Naive thymus-derived CD4-positive, alpha-beta T cell (primary cell): ENCODE measurements at regions of chr6 and their contacts with region 1.

Region 1: DNA sequence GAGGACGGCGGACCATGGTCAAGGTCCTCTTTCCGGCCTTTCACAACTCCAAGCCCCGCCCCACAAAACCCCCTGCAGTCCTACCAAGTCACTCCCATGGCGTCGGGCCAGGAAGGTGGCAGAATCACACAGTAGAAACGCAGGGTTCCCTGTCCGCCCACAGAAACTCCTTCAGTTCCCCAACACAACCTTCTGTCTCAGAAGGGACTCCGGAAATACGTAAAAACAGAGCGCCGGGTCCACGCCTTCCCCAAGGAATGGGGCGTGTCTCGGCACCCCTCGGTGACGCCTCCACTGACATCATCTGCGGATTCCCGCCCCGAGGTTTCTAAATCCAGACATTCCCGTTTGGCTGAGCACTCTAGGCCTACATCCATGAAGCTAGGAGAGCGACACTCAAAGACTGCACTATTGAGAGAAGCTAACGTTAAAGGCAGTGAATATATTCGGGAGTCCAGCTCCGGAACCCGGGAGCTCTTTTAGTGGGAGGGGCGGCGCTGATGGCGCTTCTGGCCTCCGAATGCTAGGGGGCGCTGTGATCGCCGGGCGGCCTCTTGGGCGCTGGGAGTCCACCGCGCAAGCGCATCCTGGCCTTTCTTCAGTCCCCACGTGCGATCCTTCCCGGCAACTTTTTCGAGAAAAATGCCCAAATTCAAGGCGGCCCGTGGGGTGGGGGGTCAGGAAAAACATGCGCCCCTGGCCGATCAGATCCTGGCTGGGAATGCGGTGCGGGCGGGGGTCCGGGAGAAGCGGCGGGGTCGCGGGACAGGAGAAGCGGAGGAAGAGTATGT is at the starts of genes BYSL and MED20:
- DNase-seq: peak; percentile 93 to 99 (median 96)
- ATAC-seq: peak; percentile 96
- H3K4me3 ChIP-seq: peak within 1 kb of the TSS; percentile 76
- H3K4me3 Mint-ChIP-seq: peak within 1 kb of the TSS; percentile 95 to 100 (median 99)
- H3K27ac ChIP-seq: peak within 1 kb of the TSS; percentile 95
- H3K27ac Mint-ChIP-seq: peak within 1 kb of the TSS; percentile 94 to 100 (median 99)
- H3K4me1 ChIP-seq: peaks cover 20 to 24% of the 10 kb centered on the region in 2 donors
- H3K4me1 Mint-ChIP-seq: peaks cover 27 to 58% (median 50%) of the 10 kb centered on the region in 7 donors
- H3K27me3 ChIP-seq: no peaks in the 10 kb centered on the region
- H3K27me3 Mint-ChIP-seq: peaks cover 0 to 3% (median 0%) of the 10 kb centered on the region in 5 donors
- total RNA-seq, gene BYSL: 3.9 to 35.7 (median 8.1) TPM
- total RNA-seq, gene MED20: 4.5 to 21.7 (median 9.4) TPM

Region 2: GRCh38 chr6:41895300-41896233 is 25.5 kb before region 1 on chr6 and contains the start of gene USP49:
- CTCF ChIA-PET with region 1: interaction called, 4 read pairs
- POLR2A ChIA-PET with region 1: interaction called, 8 read pairs
- intact Hi-C with region 1: loop called (anchors 1 kb)
- DNase-seq: peak; percentile 83 to 92 (median 90)
- ATAC-seq: peak; percentile 97
- H3K4me3 ChIP-seq: peak within 1 kb of the TSS; percentile 69
- H3K4me3 Mint-ChIP-seq: peak within 1 kb of the TSS in 1 of 10 donors; percentile 94
- H3K27ac ChIP-seq: peak within 1 kb of the TSS; percentile 76
- H3K27ac Mint-ChIP-seq: peak within 1 kb of the TSS in 7 of 9 donors; percentile 78 to 97 (median 93)
- H3K4me1 ChIP-seq: peaks cover 14 to 26% of the 10 kb centered on the region in 2 donors
- H3K4me1 Mint-ChIP-seq: peaks cover 5 to 17% (median 11%) of the 10 kb centered on the region in 7 donors
- H3K27me3 ChIP-seq: no peaks in the 10 kb centered on the region
- H3K27me3 Mint-ChIP-seq: peaks cover 0 to 7% (median 0%) of the 10 kb centered on the region in 5 donors
- total RNA-seq, gene USP49: 1.8 to 6.0 (median 3.1) TPM

Region 3: GRCh38 chr6:41936073-41936837 is 15.1 kb after region 1 on chr6:
- CTCF ChIA-PET with region 1: interaction called, 27 read pairs
- POLR2A ChIA-PET with region 1: interaction called, 22 read pairs
- intact Hi-C with region 1: loop called (anchors 1 kb)
- DNase-seq: peak in 8 of 9 donors; percentile 52 to 72 (median 63)
- ATAC-seq: peak; percentile 79
- H3K4me3 ChIP-seq: peak overlapping the region; percentile 34
- H3K4me3 Mint-ChIP-seq: peak overlapping the region; percentile 64 to 100 (median 90)
- H3K27ac ChIP-seq: peak overlapping the region; percentile 76
- H3K27ac Mint-ChIP-seq: peak overlapping the region; percentile 85 to 95 (median 90)
- H3K4me1 ChIP-seq: peaks cover 57 to 61% of the 10 kb centered on the region in 2 donors
- H3K4me1 Mint-ChIP-seq: peaks cover 48 to 81% (median 74%) of the 10 kb centered on the region in 7 donors
- H3K27me3 ChIP-seq: no peaks in the 10 kb centered on the region
- H3K27me3 Mint-ChIP-seq: no peaks in the 10 kb centered on the region

Region 4: DNA sequence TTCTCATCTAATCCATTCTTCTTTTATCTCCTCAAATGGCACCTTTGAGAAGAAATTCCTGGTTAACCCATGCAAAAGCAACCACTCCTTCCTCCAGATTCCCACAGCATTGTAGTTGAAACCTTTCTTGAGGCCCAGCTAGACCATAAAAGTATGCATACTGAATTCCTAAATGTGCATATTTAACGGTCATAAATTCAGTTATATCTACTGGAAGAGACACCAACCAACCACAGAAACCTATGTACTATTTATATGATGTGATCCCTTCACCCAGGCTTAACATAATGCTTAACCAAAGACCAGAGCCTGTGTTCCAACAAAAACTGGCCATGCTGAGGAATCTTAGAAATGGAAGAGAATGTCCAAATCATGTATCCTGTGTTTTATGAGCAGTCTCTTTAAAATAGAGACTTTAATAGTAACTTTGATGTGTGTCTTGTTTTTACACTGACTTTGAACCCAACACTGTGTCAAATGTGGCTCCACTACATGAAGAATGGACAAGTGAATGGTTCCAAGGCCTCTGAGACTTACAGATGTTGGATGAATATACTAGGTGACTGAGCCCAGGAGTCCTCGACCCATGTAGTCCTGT is 117.8 kb after region 1 on chr6:
- CTCF ChIA-PET with region 1: interaction called, 21 read pairs
- POLR2A ChIA-PET with region 1: interaction called, 22 read pairs
- intact Hi-C with region 1: loop called (anchors 1 kb)
- DNase-seq: no peak
- ATAC-seq: no peak
- H3K4me3 ChIP-seq: peak overlapping the region; percentile 61
- H3K4me3 Mint-ChIP-seq: peak overlapping the region; percentile 84 to 99 (median 95)
- H3K27ac ChIP-seq: peak overlapping the region; percentile 76
- H3K27ac Mint-ChIP-seq: peak overlapping the region; percentile 63 to 98 (median 94)
- H3K4me1 ChIP-seq: peaks cover 75 to 81% of the 10 kb centered on the region in 2 donors
- H3K4me1 Mint-ChIP-seq: peaks cover 43 to 85% (median 71%) of the 10 kb centered on the region in 7 donors
- H3K27me3 ChIP-seq: no peaks in the 10 kb centered on the region
- H3K27me3 Mint-ChIP-seq: no peaks in the 10 kb centered on the region

Region 5: DNA sequence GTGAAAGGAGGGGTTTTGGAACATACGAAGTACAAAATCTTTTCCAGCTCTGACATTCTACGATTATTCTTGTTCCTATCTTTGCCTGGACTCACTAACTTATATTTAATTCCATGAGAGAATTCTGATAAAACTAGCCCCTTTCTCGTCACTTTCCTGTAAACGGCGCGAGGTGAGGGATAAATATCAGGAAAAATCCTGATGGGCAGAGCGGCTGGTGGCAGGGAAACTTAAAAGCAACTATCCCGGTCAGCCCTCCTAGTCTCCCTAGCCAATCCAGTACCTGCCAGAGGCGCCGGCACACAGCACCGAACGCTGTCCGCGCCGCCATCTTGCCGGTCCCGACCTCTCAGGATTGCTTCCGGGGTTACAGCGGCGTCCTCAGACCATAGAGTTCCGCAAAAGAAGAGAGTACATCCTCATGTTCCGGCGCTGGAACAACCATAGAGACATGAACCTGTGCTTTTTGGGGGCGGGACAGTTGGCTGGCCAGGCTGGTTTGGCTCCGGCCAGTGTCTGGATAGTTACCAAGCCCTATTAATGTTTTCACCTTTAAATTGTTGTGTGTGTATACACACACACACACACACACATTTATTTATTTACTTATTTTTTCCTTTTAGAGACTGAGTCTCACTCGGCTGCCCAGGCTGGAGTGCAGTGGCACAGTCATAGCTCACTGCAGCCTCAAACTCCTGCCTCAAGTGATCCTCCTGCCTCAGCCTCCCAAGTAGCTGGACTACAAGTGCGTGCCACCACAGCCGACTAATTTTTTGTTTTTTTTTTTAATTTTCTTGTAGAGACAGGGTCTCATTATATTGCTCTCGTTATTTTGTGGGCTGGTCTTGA is 296.6 kb after region 1 on chr6 and contains the start of gene MRPS10:
- CTCF ChIA-PET with region 1: no interaction called
- POLR2A ChIA-PET with region 1: interaction called, 4 read pairs
- intact Hi-C with region 1: loop called (anchors 1 kb)
- DNase-seq: peak; percentile 72 to 92 (median 87)
- ATAC-seq: peak; percentile 100
- H3K4me3 ChIP-seq: peak within 1 kb of the TSS; percentile 96
- H3K4me3 Mint-ChIP-seq: peak within 1 kb of the TSS; percentile 92 to 100 (median 98)
- H3K27ac ChIP-seq: peak within 1 kb of the TSS; percentile 77
- H3K27ac Mint-ChIP-seq: peak within 1 kb of the TSS; percentile 87 to 99 (median 97)
- H3K4me1 ChIP-seq: peaks cover 9 to 14% of the 10 kb centered on the region in 2 donors
- H3K4me1 Mint-ChIP-seq: peaks cover 7 to 34% (median 24%) of the 10 kb centered on the region in 7 donors
- H3K27me3 ChIP-seq: no peaks in the 10 kb centered on the region
- H3K27me3 Mint-ChIP-seq: no peaks in the 10 kb centered on the region
- total RNA-seq, gene MRPS10: 17.0 to 30.3 (median 25.3) TPM